ENCODE measurements at regions of chr2 and their contacts with region 1.

Region 1: DNA sequence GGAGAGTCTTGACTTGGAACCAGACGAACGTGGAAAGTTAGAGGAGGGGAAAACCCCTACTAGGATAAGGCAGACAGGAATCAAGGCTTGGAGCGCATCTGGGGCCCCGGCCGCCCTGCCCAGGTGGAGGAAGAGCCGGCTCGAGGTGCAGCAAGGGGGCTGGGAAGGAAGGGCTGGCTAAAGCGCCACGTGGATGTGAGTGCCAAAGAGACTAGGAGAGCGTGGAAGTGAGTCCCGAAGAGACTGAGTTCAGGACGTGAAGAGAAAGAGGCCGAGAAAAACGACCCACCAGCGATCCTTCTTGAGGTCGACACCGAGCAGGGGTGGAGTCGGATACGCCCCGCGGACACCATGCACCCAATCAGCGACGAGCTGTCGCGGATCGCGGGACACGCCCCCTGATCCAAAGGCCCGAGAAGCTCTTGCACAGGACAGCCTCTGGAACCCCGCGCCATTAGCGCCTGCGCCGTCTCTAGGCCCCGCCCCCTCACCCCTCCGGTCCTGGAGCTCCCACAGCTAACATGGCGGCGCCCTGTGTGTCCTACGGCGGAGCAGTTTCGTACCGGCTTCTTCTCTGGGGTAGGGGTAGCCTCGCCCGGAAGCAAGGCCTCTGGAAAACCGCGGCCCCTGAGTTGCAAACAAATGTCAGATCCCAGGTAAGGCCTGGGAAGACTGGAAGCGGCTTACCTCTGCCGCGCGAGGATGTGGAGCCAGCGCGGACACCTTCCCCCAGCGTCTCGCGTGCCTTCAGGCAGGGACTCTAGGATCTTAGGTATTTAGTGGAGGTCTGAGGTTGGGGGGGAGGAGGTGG is at the start of gene MRPS9:
- DNase-seq: peak; percentile 99
- H3K4me3 ChIP-seq: peak within 1 kb of the TSS; percentile 69 to 99 (median 92)
- H3K27ac ChIP-seq: peak within 1 kb of the TSS; percentile 43 to 95 (median 84)
- H3K27me3 ChIP-seq: no peaks in the 10 kb centered on the region
- CTCF ChIP-seq: peak in 31 of 56 donors; percentile 2 to 57 (median 26)
- total RNA-seq, gene MRPS9: 10.9 to 29.3 (median 20.1) TPM

Region 2: DNA sequence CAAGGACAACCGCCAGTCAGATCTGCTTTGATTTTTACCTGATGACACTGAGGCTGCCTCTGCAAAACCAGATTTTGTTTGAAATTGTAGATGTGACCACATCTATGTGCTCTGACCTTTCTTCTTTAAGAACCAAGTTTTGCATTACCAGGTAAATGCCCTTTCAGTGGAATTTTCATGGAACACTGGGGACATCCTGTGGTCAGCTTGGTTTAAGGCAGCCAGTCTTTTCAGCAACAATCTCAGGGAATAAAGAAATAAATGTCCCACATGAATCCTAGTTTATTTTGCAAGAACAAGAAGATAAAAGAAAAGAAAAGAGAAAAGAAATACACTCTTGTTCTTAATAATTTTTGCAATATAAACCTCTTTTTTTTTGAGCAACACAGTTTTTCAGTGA is 93.3 kb before region 1 on chr2:
- intact Hi-C with region 1: loop called in 1 of 2 experiments (anchors 2 kb)
- DNase-seq: peak in 1 of 10 donors; percentile 28
- H3K4me3 ChIP-seq: peak overlapping the region in 1 of 59 donors; percentile 8
- H3K27ac ChIP-seq: peak overlapping the region in 54 of 59 donors; percentile 41 to 98 (median 90)
- H3K27me3 ChIP-seq: no peaks in the 10 kb centered on the region
- CTCF ChIP-seq: peak; percentile 21 to 87 (median 60)

Region 3: GRCh38 chr2:105156215-105156614 is 118.4 kb after region 1 on chr2:
- intact Hi-C with region 1: no loop called
- DNase-seq: no peak
- H3K4me3 ChIP-seq: no peak overlapping the region
- H3K27ac ChIP-seq: no peak overlapping the region
- H3K27me3 ChIP-seq: peaks cover 0 to 3% (median 0%) of the 10 kb centered on the region in 45 donors
- CTCF ChIP-seq: no peak

Measured in dorsolateral prefrontal cortex (tissue), 120 donors.